Pancreas (tissue), 10 donors: ENCODE measurements at regions of chr20 and their contacts with region 1.

Region 1: GRCh38 chr20:62671765-62672164 is 29.5 kb downstream of the SLCO4A1 start:
- DNase-seq: peak in 1 of 6 donors; percentile 27
- ATAC-seq: no peak
- H3K4me3 ChIP-seq: no peak overlapping the region
- H3K27ac ChIP-seq: no peak overlapping the region
- H3K4me1 ChIP-seq: no peaks in the 10 kb centered on the region
- H3K27me3 ChIP-seq: no peaks in the 10 kb centered on the region
- CTCF ChIP-seq: no peak

Region 2: DNA sequence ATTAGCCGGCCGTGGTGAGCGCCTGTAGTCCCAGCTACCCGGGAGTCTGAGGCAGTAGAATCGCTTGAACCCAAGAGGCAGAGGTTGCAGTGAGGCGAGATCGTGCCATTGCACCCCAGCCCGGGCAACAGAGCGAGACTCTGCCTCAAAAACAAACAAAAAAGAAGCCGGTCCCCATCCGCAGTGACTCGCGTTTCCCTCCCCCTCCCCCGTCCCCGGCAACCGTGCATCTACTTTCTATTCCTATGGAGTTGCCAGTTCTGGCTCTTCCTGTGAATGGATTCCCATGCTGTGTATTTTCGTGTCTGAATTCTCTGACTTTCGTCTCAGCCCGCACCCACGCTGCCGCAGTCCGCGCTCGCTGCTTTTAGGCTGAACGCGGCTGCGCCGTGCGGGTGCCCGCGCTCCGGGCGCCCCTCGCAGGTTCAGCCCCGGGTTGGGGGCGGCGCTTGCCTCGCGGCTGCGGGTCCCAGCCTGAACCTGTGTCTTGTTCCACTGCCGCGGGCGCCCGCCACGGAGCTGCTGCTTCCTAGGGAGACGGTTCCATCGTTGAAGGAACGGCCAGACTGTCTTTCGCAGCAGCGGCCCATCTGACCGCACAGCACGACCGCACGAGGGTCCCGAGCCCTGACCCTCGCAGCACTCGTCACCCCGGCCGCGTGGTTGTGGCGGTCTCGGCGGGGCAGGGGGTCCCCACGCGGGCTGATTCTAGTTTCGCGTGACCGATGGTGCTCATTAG is 123.4 kb after region 1 on chr20:
- intact Hi-C with region 1: no loop called
- DNase-seq: peak in 4 of 6 donors; percentile 42 to 77 (median 56)
- ATAC-seq: peak; percentile 1 to 14 (median 4)
- H3K4me3 ChIP-seq: peak overlapping the region; percentile 31 to 67 (median 58)
- H3K27ac ChIP-seq: peak overlapping the region; percentile 61 to 89 (median 80)
- H3K4me1 ChIP-seq: peaks cover 0 to 9% (median 5%) of the 10 kb centered on the region in 3 donors
- H3K27me3 ChIP-seq: no peaks in the 10 kb centered on the region
- CTCF ChIP-seq: no peak

Region 3: DNA sequence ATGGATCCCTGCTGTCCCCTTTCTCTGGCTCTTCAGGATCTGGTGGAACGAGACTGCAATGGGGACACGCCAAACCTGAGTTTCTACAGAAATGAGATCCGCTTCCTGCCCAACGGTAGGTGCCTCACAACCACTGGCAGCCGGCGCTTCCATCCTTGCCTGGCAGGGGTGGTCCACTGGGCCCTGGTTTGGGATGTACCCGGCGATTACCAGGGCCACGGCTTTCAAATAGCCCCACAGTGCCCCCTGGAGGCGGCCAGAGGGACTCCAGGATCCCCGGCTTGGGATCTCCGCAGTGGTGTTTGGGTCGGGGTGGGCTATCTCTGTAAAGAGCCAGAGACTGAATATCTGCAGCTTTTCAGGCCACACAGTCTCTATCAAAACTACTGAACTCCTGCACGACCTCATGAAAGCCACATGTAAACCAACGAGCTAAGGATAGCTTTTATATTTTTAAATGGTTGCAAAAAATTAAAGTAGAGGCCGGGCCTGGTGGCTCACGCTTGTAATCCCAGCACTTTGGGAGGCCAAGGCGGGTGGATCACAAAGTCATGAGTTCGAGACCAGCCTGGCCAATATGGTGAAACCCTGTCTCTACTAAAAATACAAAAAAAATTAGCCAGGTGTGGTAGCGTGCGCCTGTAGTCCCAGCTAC is 136.6 kb after region 1 on chr20:
- intact Hi-C with region 1: loop called in 1 of 3 experiments (anchors 5 kb)
- DNase-seq: peak in 3 of 6 donors; percentile 74 to 88 (median 75)
- ATAC-seq: peak; percentile 32 to 73 (median 64)
- H3K4me3 ChIP-seq: no peak overlapping the region
- H3K27ac ChIP-seq: no peak overlapping the region
- H3K4me1 ChIP-seq: peaks cover 7 to 11% (median 9%) of the 10 kb centered on the region in 3 donors
- H3K27me3 ChIP-seq: no peaks in the 10 kb centered on the region
- CTCF ChIP-seq: peak; percentile 81 to 94 (median 88)